CD8-positive, alpha-beta T cell (primary cell): ENCODE measurements at regions of chr9 and their contacts with region 1.

Region 1: DNA sequence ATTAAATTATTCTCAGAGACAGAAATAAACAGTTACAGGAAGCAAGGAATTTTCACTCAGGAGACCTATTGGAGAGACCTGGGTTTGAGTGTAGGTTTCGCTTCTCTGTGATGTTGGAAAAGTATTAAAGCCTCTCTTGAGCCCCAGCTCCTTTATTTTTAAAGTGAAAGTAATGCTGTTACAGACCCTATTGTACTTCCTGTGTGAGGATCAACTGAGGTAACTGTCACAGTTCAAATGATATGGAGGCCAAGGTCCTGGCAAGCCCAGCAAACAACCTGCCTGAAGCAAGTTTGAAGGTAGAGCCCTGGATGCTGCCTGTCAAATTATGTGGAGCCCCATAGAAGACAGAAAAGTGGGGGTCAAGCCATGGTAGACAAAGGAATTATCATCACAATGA is 7.9 kb upstream of the HACD4 start:
- DNase-seq: peak in 1 of 9 experiments; percentile 10
- ATAC-seq: no peak
- H3K4me3 ChIP-seq: no peak overlapping the region
- H3K4me3 Mint-ChIP-seq: no peak overlapping the region
- H3K27ac ChIP-seq: no peak overlapping the region
- H3K27ac Mint-ChIP-seq: peak overlapping the region; percentile 8
- H3K4me1 ChIP-seq: peaks cover 7% of the 10 kb centered on the region
- H3K4me1 Mint-ChIP-seq: peaks cover 9% of the 10 kb centered on the region
- H3K27me3 ChIP-seq: no peaks in the 10 kb centered on the region
- H3K27me3 Mint-ChIP-seq: no peaks in the 10 kb centered on the region
- CTCF ChIP-seq: no peak

Region 2: GRCh38 chr9:20930836-20931235 is 108.5 kb before region 1 on chr9:
- CTCF ChIA-PET with region 1: no interaction called
- POLR2A ChIA-PET with region 1: no interaction called
- intact Hi-C with region 1: no loop called
- DNase-seq: no peak
- ATAC-seq: no peak
- H3K4me3 ChIP-seq: no peak overlapping the region
- H3K4me3 Mint-ChIP-seq: no peak overlapping the region
- H3K27ac ChIP-seq: no peak overlapping the region
- H3K27ac Mint-ChIP-seq: no peak overlapping the region
- H3K4me1 ChIP-seq: no peaks in the 10 kb centered on the region
- H3K4me1 Mint-ChIP-seq: peaks cover 9% of the 10 kb centered on the region
- H3K27me3 ChIP-seq: no peaks in the 10 kb centered on the region
- H3K27me3 Mint-ChIP-seq: no peaks in the 10 kb centered on the region
- CTCF ChIP-seq: no peak

Region 3: DNA sequence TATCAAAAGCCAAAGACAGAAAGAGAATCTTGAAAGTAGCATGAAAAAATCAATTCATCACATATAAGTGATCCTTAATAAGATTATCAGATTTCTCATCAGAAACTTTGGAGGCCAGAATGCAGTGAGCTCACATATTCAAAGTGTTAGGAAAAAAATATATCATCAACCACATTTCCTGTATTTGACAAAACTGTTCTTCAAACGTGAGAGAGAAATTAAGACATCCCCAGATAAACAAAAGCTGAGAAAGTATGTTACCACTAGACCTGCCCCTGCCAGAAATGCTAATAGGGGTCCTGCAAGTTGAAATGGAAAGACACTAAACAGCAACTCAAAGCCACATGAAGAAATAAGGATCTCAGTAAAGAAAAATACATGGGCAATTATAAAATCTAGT is 37.7 kb before region 1 on chr9:
- CTCF ChIA-PET with region 1: no interaction called
- POLR2A ChIA-PET with region 1: no interaction called
- intact Hi-C with region 1: loop called in 1 of 2 experiments (anchors 5 kb)
- DNase-seq: peak in 4 of 9 experiments; percentile 4 to 59 (median 28)
- ATAC-seq: peak; percentile 73
- H3K4me3 ChIP-seq: no peak overlapping the region
- H3K4me3 Mint-ChIP-seq: peak overlapping the region; percentile 16
- H3K27ac ChIP-seq: peak overlapping the region in 1 of 2 experiments; percentile 67
- H3K27ac Mint-ChIP-seq: peak overlapping the region; percentile 87
- H3K4me1 ChIP-seq: peaks cover 4% of the 10 kb centered on the region
- H3K4me1 Mint-ChIP-seq: peaks cover 29% of the 10 kb centered on the region
- H3K27me3 ChIP-seq: no peaks in the 10 kb centered on the region
- H3K27me3 Mint-ChIP-seq: no peaks in the 10 kb centered on the region
- CTCF ChIP-seq: no peak

Region 4: DNA sequence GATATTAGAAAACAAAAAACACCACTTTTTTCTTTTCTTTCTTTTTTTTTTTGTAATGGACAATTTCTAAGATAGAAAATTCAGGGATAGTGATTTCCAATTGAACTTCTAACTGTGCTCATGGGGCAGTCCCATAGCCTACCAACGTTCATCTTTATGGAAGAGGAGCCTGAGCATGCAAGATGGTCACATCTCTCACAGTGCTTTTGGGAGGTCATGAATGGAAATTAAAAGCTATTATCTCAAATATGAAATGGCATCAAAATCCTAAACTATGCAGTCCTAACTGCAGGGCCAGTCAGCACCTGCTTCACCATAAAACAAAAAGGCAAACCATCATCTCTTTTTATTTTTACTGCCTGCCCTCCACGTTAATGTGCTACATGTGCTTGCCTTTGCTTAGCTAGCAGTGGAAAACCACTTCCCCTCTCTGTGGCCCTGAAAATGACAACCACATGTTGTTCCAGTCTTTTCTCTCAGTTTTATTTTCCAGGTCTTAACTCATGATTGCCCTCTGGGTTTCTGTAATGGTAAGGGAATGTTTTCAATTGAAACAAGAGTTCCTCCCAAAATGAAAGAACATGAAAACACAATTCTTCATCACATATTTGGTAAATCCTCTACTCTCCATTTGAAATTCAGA is 21.7 kb after region 1 on chr9:
- CTCF ChIA-PET with region 1: no interaction called
- POLR2A ChIA-PET with region 1: interaction called, 3 read pairs
- intact Hi-C with region 1: loop called (anchors 2 kb)
- DNase-seq: peak in 2 of 9 experiments; percentile 6 to 27
- ATAC-seq: no peak
- H3K4me3 ChIP-seq: no peak overlapping the region
- H3K4me3 Mint-ChIP-seq: no peak overlapping the region
- H3K27ac ChIP-seq: no peak overlapping the region
- H3K27ac Mint-ChIP-seq: peak overlapping the region; percentile 66
- H3K4me1 ChIP-seq: peaks cover 12% of the 10 kb centered on the region
- H3K4me1 Mint-ChIP-seq: peaks cover 20% of the 10 kb centered on the region
- H3K27me3 ChIP-seq: no peaks in the 10 kb centered on the region
- H3K27me3 Mint-ChIP-seq: no peaks in the 10 kb centered on the region
- CTCF ChIP-seq: no peak